Stomach (tissue), 19 donors: ENCODE measurements at regions of chr11 and their contacts with region 1.

Region 1: DNA sequence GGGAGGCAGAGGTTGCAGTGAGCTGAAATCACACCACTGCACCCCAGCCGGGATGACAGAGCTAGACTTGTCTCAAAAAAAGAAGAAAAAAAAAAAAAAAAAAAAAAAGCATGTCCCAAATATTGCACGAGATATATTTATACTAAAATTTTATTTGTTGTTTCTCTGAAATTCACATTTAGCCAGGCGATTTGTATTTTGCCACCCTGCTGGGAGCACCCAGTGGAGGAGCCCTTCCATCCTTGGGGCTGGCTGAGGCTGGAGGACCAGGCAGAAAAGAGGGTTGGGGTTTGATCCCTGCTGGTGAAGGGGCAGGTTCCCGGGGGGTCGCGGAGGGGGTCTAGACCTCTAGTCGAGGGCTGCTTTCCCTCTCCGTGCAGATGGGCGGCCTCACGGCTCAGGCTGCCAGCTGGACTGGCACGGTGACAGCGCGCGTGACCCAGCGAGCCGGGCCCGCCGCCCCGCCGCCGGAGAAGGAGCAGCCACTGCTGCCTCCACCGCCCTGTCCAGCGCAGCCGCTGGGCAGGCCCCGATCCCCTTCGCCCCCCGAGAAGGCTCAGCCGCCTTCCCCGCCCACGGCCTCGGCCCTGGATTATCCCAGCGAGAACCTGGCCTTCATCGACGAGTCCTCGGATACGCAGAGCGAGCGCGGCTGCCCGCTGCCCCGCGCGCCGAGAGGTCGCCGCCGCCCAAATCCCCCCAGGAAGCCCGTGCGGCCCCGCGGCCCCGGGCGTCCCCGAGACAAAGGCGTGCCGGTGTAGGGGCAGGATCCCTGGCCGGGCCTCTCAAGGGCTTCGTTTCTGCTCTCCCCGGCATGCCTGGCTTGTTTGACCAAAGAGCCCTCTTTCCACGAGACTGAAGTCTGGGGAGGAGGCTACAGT is 952 bp upstream of the CATSPERZ start:
- DNase-seq: peak; percentile 78 to 79
- H3K4me3 ChIP-seq: peak overlapping the region; percentile 43 to 55 (median 44)
- H3K27ac ChIP-seq: peak overlapping the region in 1 of 5 donors; percentile 9
- H3K4me1 ChIP-seq: peaks cover 36 to 50% (median 36%) of the 10 kb centered on the region in 4 donors
- H3K27me3 ChIP-seq: peaks cover 17 to 95% (median 45%) of the 10 kb centered on the region in 3 donors
- CTCF ChIP-seq: no peak
- EP300 ChIP-seq: no peak
- POLR2A ChIP-seq: no peak

Region 2: DNA sequence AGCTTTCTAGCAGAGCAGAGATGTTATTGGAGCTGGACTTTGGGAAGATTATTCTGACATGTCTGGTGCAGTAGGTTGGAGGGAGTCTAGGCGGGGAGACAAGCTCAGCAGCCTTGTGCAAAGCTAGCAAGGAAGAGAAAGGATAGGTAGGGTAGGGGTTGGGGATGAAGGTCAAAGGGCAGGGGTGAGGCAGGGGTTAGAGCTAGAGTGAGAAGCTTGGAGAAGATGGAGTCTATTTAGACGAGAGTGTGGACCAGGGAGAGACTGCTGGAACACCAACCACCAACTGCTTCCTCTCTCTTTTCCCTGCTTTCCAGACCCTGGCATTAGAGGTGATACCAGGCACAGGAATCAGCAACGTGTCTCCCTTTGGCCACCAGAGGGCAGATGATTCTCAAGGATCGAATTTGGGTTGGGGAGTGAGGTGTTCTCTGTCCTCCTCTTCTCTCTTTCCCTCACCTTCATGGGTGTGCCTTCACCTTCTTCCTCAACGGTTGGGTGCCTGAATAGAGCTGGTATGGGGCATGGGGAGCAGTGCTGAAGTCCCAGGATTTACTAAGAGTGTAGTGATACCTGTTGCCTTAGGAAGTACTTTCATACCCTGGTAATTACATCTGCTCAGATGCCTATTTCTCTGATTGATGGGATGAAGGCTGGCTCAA is 462.0 kb before region 1 on chr11:
- intact Hi-C with region 1: no loop called
- DNase-seq: peak; percentile 84 to 92
- H3K4me3 ChIP-seq: no peak overlapping the region
- H3K27ac ChIP-seq: peak overlapping the region; percentile 82 to 94 (median 89)
- H3K4me1 ChIP-seq: peaks cover 30 to 41% (median 37%) of the 10 kb centered on the region in 4 donors
- H3K27me3 ChIP-seq: no peaks in the 10 kb centered on the region
- CTCF ChIP-seq: peak in 6 of 7 experiments; percentile 22 to 98 (median 84)
- EP300 ChIP-seq: no peak
- POLR2A ChIP-seq: no peak

Region 3: DNA sequence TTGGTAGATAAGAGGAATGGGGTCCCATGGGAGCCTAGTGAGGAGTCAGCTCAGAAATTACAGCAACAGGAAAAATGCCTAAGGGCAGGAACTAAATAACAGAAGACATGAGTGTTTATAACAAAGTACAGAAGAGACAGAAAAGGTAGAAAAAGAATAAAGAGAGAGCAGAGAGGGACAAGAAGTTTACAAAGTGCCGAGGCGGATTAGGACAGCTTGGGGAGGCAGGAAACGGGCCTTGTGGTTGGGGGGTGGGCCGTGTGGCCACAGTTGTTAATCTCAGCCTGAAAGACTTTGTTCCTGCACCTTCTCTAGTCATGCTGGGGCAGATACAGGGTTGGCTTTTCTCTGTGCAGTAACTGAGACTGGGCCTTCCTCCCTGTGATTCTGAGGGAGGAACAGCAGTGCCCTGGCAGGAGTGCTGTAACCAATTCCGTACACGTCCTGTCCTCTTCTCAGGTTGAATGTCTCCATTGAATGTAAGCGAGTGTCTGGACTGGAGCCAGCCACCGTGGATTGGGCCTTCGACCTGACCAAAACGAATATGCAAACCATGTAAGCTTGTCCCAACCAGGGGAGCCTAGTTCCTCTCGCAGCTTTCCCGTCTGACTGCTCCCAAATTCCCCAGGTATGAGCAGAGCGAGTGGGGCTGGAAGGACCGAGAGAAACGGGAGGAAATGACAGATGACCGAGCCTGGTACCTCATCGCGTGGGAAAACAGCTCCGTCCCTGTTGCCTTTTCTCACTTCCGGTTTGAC is 347.2 kb before region 1 on chr11:
- intact Hi-C with region 1: no loop called
- DNase-seq: no peak
- H3K4me3 ChIP-seq: no peak overlapping the region
- H3K27ac ChIP-seq: peak overlapping the region in 1 of 5 donors; percentile 20
- H3K4me1 ChIP-seq: no peaks in the 10 kb centered on the region
- H3K27me3 ChIP-seq: no peaks in the 10 kb centered on the region
- CTCF ChIP-seq: no peak
- EP300 ChIP-seq: no peak
- POLR2A ChIP-seq: no peak

Region 4: GRCh38 chr11:64204464-64204989 is 94.7 kb before region 1 on chr11:
- intact Hi-C with region 1: loop called (anchors 10 kb)
- DNase-seq: peak; percentile 94 to 95
- H3K4me3 ChIP-seq: no peak overlapping the region
- H3K27ac ChIP-seq: peak overlapping the region in 3 of 5 donors; percentile 85 to 91 (median 87)
- H3K4me1 ChIP-seq: peaks cover 41 to 58% (median 49%) of the 10 kb centered on the region in 4 donors
- H3K27me3 ChIP-seq: no peaks in the 10 kb centered on the region
- CTCF ChIP-seq: peak in 5 of 7 experiments; percentile 57 to 80 (median 66)
- EP300 ChIP-seq: no peak
- POLR2A ChIP-seq: no peak

Region 5: GRCh38 chr11:64436000-64436399 is 136.8 kb after region 1 on chr11:
- intact Hi-C with region 1: no loop called
- DNase-seq: no peak
- H3K4me3 ChIP-seq: no peak overlapping the region
- H3K27ac ChIP-seq: no peak overlapping the region
- H3K4me1 ChIP-seq: no peaks in the 10 kb centered on the region
- H3K27me3 ChIP-seq: peaks cover 0 to 63% (median 8%) of the 10 kb centered on the region in 3 donors
- CTCF ChIP-seq: no peak
- EP300 ChIP-seq: no peak
- POLR2A ChIP-seq: no peak